WTC11 (cell line): ENCODE measurements at regions of chr11 and their contacts with region 1.

Region 1: GRCh38 chr11:43895601-43896000 is 15.0 kb downstream of the ALKBH3 start:
- DNase-seq: no peak
- ATAC-seq: no peak
- H3K4me3 Mint-ChIP-seq: no peak overlapping the region
- H3K27ac Mint-ChIP-seq: no peak overlapping the region
- H3K4me1 Mint-ChIP-seq: no peaks in the 10 kb centered on the region
- H3K27me3 Mint-ChIP-seq: no peaks in the 10 kb centered on the region
- CTCF ChIP-seq: no peak

Region 2: DNA sequence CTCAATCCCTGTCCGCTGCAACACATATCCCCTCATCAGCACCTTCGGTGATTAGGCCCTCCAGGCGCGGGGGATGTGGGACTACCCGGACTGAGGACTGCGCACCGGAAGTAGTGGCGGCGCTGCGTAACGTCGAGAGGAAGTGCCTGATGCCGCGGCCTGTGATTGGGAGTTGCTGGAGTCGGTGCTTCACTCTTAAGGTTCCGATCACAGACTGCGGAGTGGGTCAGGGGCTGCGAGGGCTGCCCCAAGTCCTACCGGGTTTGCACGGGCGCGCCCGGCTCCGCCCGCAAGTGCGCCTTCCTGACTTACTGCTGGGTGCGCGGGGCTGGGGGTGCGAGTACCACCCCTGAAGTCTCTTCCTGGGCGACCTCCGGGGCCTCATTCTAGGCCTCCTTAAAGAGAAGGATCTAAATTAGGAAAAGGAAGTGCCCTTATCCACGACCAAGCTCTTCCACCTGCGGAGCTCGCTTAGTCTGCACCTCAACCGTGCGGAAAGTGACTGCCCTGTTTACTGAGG is 14.9 kb before region 1 on chr11 and contains the start of gene ALKBH3:
- CTCF ChIA-PET with region 1: interaction called, 11 read pairs
- POLR2A ChIA-PET with region 1: no interaction called
- DNase-seq: peak; percentile 87
- ATAC-seq: peak; percentile 98
- H3K4me3 Mint-ChIP-seq: peak within 1 kb of the TSS; percentile 79
- H3K27ac Mint-ChIP-seq: no peak within 1 kb of the TSS; the same call in 1 of the 2 replicates
- H3K4me1 Mint-ChIP-seq: peaks cover 9% of the 10 kb centered on the region
- H3K27me3 Mint-ChIP-seq: peaks cover 63% of the 10 kb centered on the region
- CTCF ChIP-seq: no peak
- total RNA-seq, gene ALKBH3: 11.0 to 13.3 TPM (median 12.3 TPM) in 3 replicates

Region 3: DNA sequence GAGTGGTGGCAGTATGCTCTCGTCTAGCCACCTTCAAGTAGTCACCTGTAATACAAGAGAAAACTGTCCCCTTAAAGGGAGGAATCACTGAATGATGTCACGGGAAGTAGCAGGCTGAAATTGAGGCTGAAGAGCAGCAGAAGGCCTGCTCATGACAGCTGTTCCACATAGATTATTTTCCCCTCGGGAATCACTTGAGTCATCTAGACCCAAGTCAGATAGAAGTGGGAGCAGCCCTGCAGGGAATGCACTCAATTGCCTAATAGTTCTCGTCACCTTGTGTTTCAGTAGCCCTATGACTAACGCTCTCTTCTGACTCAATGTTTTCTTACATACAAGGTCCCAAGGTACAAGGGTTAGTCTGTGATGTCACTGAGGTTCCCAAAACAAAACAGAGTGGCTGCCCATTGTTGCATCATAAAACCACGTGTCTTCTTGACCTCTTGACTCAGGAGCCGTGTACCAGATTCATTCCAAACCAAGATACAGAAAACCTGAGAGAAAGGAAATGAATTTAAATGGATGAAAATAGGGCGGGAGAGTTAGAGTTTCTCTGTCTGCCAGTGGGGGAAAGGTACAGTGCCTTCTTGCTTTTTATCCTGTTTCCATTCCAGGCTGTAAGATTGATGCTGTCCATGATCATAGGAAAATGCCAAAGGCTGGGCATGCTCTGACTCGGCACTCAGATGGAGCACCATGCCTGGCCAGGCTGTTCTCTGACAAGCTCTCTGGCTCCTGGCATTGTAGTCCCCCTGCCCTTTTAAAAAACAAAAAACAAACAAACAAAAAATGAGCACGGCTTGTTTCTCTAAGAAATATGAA is 25.2 kb after region 1 on chr11:
- CTCF ChIA-PET with region 1: interaction called, 14 read pairs
- POLR2A ChIA-PET with region 1: interaction called, 4 read pairs
- DNase-seq: no peak
- ATAC-seq: no peak
- H3K4me3 Mint-ChIP-seq: no peak overlapping the region
- H3K27ac Mint-ChIP-seq: peak overlapping the region; percentile 63; the same call in 1 of the 2 replicates
- H3K4me1 Mint-ChIP-seq: peaks cover 8% of the 10 kb centered on the region
- H3K27me3 Mint-ChIP-seq: no peaks in the 10 kb centered on the region
- CTCF ChIP-seq: no peak

Region 4: DNA sequence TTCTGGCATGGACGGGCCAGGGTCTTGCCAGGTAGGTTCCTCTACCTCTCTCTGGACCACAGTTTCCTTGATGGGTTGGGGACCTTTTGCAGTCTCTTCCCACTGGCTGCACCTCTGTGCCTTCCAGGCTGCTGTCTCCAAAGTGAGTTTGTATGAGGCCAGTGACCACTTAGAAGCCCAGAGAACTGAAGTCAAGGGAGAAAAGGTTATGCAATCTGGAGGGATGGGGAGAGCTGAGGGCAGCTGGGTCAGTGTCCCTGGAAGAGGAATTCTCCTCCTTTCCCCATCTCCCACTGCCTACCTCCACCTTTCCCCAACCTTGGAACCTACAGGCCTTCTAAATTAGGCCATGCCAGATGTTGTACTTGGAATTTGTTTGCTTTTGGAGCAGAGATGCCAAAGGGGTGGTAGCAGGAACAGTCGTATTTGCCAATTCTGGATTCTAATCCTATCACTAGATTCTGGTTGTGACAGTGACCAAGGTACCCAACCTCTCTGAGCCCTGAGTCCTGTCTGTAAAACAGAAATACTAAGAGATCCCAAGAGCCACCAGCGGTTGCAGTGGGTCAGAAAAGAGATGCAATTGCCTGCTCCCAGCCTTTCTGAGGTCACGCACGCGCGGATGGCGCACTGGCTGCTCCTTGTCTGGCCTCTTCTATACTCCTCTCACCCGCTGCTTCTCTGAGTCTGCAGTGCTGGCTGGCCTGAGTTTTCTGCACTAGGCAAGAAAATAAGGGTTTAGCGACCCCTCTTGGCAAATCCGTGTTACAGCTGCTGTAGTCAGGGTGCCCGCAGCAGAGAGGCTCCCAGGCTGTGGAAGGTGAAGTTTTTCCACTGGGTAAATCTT is 141.4 kb after region 1 on chr11:
- CTCF ChIA-PET with region 1: interaction called, 21 read pairs
- POLR2A ChIA-PET with region 1: no interaction called
- DNase-seq: peak; percentile 81
- ATAC-seq: peak; percentile 98
- H3K4me3 Mint-ChIP-seq: no peak overlapping the region
- H3K27ac Mint-ChIP-seq: no peak overlapping the region
- H3K4me1 Mint-ChIP-seq: no peaks in the 10 kb centered on the region
- H3K27me3 Mint-ChIP-seq: peaks cover 2% of the 10 kb centered on the region
- CTCF ChIP-seq: peak; percentile 48; the same call in 1 of the 2 replicates